Activated CD4-positive, alpha-beta T cell treated with anti-CD3 and anti-CD28 coated beads, Interleukin-2, amount 10 ng/mL, durations not matched to agents 24 days and 14 days (primary cell): ENCODE measurements at regions of chr16 and their contacts with region 1.

Region 1: GRCh38 chr16:70737377-70738082 is 51.7 kb upstream of the MTSS2 start:
- DNase-seq: peak; percentile 95
- H3K4me3 Mint-ChIP-seq: peak overlapping the region; percentile 85
- H3K27ac Mint-ChIP-seq: peak overlapping the region; percentile 99
- H3K4me1 Mint-ChIP-seq: peaks cover 60% of the 10 kb centered on the region
- H3K27me3 Mint-ChIP-seq: no peaks in the 10 kb centered on the region

Region 2: DNA sequence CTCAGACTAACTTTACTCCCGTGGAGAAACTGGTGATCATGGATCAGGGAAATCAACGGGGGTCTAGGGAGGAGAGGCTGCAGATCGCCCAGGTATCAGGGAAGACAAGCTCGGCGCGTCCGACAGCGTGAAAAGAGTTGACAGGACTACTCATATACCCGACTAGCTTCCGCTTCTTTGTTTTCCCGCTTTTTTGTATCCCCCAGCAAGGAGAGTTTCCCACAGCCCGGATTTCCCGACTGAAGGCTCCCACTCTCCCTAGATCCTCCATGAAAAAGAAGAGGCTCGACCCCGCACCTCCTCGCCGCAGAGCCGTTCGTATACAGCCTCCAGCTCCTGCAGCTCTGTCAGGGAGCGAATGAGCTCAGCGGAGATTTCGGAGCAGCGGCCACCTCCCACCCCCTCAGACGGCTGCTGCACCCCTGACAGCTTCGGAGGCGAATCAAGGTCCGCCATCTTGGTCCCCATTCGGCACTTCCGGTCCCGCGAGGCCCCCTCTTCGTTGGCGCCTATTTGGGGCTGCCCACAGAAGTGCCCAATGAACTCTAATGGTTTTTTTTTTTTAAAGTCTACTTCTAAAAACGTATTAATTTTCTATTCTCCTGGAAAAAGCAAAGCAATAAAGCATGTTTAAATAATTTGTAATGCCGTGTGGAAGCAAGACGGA is 214.3 kb before region 1 on chr16 and contains the start of gene COG4:
- intact Hi-C with region 1: no loop called
- DNase-seq: peak; percentile 97
- H3K4me3 Mint-ChIP-seq: peak within 1 kb of the TSS; percentile 92
- H3K27ac Mint-ChIP-seq: peak within 1 kb of the TSS; percentile 96
- H3K4me1 Mint-ChIP-seq: peaks cover 41% of the 10 kb centered on the region
- H3K27me3 Mint-ChIP-seq: no peaks in the 10 kb centered on the region
- total RNA-seq, gene COG4: 38.3 and 42.1 TPM in 2 replicates

Region 3: DNA sequence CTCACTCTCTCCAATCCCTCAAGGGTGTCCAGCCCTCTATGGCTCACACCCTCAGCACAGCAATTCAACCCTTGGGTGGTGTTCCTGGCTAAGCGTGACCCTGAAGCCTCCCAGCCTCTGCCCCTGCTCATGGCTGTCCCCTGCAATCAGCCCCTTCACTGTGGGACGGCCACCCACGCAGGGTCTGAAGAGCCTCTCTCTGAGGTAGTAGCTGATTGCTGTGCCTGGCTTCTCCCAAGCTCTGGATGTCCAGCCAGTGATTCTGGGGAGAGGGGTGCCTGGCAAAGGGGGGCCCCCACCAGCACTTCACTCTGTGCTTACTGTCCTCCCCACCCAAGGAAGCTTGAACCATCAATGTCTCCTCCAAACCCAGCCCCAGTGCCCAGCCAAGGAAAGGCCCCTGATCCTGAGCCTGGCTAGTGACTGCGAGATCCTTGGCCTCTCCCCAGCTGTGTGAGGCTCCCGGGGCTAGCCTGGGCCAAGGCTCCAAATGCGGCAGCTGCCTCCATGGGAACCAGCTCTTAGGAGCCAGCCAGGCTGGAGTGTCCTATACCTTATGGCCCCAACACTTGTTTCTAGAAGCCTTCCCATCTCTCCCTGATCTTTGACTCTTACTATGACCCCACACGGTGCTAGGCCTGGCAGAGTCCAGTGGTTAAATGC is 61.5 kb before region 1 on chr16:
- intact Hi-C with region 1: no loop called
- DNase-seq: no peak
- H3K4me3 Mint-ChIP-seq: no peak overlapping the region
- H3K27ac Mint-ChIP-seq: no peak overlapping the region
- H3K4me1 Mint-ChIP-seq: peaks cover 2% of the 10 kb centered on the region
- H3K27me3 Mint-ChIP-seq: no peaks in the 10 kb centered on the region

Region 4: DNA sequence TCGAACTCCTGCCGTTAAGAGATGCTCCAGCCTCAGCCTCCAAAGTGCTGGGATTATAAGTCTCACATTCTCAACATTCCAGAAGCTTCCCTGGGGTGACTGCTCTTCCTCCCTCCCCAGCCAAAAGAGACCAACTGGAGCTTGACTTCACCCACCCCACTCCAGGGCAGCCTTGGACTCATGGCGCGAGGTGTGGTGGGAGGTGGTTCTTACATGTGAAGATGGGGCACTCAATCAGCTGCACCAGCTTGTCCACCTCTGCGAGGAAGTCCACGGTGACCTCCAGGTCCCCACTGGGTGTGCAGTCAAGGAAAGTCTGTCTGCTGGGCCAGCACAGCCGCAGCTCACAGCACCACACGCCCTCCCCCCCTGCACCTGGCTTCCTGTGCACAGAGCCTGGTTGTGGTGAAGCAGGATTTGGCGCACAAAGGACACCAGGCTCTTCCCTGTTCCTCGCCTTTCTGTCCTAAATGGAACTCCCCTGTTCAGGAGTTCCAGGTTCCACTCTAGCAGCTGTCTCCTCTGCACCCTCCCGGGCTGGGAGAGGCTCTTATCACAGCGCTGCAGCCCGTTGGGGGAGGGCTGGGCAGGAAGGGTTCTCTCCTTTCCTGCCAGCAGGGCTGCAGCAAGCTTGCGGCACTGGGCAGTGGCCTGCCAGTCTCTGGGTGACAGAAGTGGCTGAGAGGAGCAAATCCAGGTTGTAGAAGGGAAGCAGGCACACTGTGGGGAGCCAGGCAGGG is 42.0 kb before region 1 on chr16:
- intact Hi-C with region 1: loop called (anchors 5 kb)
- DNase-seq: peak; percentile 80
- H3K4me3 Mint-ChIP-seq: peak overlapping the region; percentile 42
- H3K27ac Mint-ChIP-seq: peak overlapping the region; percentile 84
- H3K4me1 Mint-ChIP-seq: peaks cover 20% of the 10 kb centered on the region
- H3K27me3 Mint-ChIP-seq: no peaks in the 10 kb centered on the region

Region 5: GRCh38 chr16:70800781-70801530 is 63.4 kb after region 1 on chr16 and contains the start of gene VAC14:
- intact Hi-C with region 1: loop called (anchors 1 kb)
- DNase-seq: peak; percentile 99
- H3K4me3 Mint-ChIP-seq: peak within 1 kb of the TSS; percentile 96
- H3K27ac Mint-ChIP-seq: peak within 1 kb of the TSS; percentile 93
- H3K4me1 Mint-ChIP-seq: peaks cover 27% of the 10 kb centered on the region
- H3K27me3 Mint-ChIP-seq: no peaks in the 10 kb centered on the region
- total RNA-seq, gene VAC14: 36.3 and 38.6 TPM in 2 replicates